PC-3 (cell line): ENCODE measurements at regions of chr5 and their contacts with region 1.

Region 1: DNA sequence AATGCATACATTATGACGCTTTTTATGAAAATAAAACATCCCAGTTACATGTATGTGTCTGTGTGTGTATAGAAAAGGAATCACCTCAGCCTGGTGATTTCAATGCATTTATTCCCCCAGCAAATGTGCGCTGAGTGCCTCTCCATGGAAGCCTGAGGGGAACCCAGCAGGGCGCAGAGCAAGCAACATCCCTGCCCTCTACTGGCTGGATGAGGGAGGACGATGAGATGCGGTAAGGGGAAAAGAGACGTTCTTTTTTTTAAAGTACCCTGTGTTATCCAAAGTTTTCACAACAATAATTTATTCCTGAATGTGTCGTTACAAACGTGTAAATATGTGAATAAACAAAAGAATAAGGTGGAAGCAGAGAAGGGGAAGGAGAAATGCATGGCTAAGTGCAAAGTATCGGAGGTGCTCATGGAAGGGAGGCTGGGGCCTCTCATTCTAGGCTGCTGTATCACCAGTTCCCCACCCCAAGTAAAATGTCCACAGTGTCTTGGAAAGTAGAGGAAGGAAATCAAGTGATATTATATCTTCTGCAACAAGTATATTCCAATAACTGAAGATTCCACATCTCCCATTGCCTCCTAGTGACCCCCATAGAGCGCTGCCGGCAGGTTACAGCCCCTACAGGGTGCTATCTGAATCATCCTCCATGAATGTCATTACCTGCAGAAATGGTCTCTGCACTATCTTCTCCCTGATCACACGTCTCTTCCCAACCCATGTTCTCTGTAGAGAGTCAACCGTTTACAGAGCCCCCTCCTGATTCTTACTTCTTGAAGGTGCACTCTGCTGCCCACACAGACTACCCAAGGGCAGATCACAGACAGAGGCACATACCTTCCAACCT is 13.0 kb upstream of the ABLIM3 start:
- DNase-seq: peak; percentile 87
- ATAC-seq: peak; percentile 48
- H3K4me3 ChIP-seq: no peak overlapping the region
- H3K27ac ChIP-seq: peak overlapping the region; percentile 19
- H3K4me1 ChIP-seq: peaks cover 71% of the 10 kb centered on the region
- H3K27me3 ChIP-seq: no peaks in the 10 kb centered on the region
- CTCF ChIP-seq: peak; percentile 100

Region 2: GRCh38 chr5:147699496-147700088 is 1428.7 kb before region 1 on chr5:
- CTCF ChIA-PET with region 1: no interaction called
- POLR2A ChIA-PET with region 1: interaction called, 21 read pairs
- intact Hi-C with region 1: no loop called
- DNase-seq: no peak
- ATAC-seq: no peak
- H3K4me3 ChIP-seq: no peak overlapping the region
- H3K27ac ChIP-seq: no peak overlapping the region
- H3K4me1 ChIP-seq: no peaks in the 10 kb centered on the region
- H3K27me3 ChIP-seq: no peaks in the 10 kb centered on the region
- CTCF ChIP-seq: no peak

Region 3: DNA sequence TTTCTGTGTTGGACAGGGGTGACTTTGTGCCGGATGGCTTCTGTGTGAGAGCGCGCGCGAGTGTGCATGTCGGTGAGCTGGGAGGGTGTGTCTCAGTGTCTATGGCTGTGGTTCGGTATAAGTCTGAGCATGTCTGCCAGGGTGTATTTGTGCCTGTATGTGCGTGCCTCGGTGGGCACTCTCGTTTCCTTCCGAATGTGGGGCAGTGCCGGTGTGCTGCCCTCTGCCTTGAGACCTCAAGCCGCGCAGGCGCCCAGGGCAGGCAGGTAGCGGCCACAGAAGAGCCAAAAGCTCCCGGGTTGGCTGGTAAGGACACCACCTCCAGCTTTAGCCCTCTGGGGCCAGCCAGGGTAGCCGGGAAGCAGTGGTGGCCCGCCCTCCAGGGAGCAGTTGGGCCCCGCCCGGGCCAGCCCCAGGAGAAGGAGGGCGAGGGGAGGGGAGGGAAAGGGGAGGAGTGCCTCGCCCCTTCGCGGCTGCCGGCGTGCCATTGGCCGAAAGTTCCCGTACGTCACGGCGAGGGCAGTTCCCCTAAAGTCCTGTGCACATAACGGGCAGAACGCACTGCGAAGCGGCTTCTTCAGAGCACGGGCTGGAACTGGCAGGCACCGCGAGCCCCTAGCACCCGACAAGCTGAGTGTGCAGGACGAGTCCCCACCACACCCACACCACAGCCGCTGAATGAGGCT is 302.1 kb before region 1 on chr5 and contains the start of gene ADRB2:
- CTCF ChIA-PET with region 1: interaction called, 3 read pairs
- POLR2A ChIA-PET with region 1: interaction called, 4 read pairs
- intact Hi-C with region 1: loop called (anchors 5 kb)
- DNase-seq: peak; percentile 100
- ATAC-seq: peak; percentile 83
- H3K4me3 ChIP-seq: peak within 1 kb of the TSS; percentile 73
- H3K27ac ChIP-seq: peak within 1 kb of the TSS; percentile 69
- H3K4me1 ChIP-seq: peaks cover 51% of the 10 kb centered on the region
- H3K27me3 ChIP-seq: no peaks in the 10 kb centered on the region
- CTCF ChIP-seq: no peak
- total RNA-seq, gene ADRB2: 41.1 and 42.1 TPM in 2 replicates

Region 4: GRCh38 chr5:149141224-149141956 is 13.1 kb after region 1 on chr5 and contains the start of gene ABLIM3:
- CTCF ChIA-PET with region 1: interaction called, 10 read pairs
- POLR2A ChIA-PET with region 1: no interaction called
- intact Hi-C with region 1: loop called (anchors 1 kb)
- DNase-seq: peak; percentile 96
- ATAC-seq: peak; percentile 70
- H3K4me3 ChIP-seq: peak within 1 kb of the TSS; percentile 79
- H3K27ac ChIP-seq: peak within 1 kb of the TSS; percentile 75
- H3K4me1 ChIP-seq: peaks cover 49% of the 10 kb centered on the region
- H3K27me3 ChIP-seq: no peaks in the 10 kb centered on the region
- CTCF ChIP-seq: peak; percentile 100
- total RNA-seq, gene ABLIM3: 43.6 and 48.0 TPM in 2 replicates

Region 5: GRCh38 chr5:149268928-149269557 is 140.8 kb after region 1 on chr5:
- CTCF ChIA-PET with region 1: interaction called, 29 read pairs
- POLR2A ChIA-PET with region 1: interaction called, 8 read pairs
- intact Hi-C with region 1: loop called (anchors 1 kb)
- DNase-seq: peak; percentile 96
- ATAC-seq: 0 out of 2 replicates have a peak, but pooled peaks have one; percentile 3
- H3K4me3 ChIP-seq: no peak overlapping the region
- H3K27ac ChIP-seq: no peak overlapping the region
- H3K4me1 ChIP-seq: peaks cover 28% of the 10 kb centered on the region
- H3K27me3 ChIP-seq: no peaks in the 10 kb centered on the region
- CTCF ChIP-seq: peak; percentile 99